ENCODE measurements at regions of chr3 and their contacts with region 1.

Region 1: DNA sequence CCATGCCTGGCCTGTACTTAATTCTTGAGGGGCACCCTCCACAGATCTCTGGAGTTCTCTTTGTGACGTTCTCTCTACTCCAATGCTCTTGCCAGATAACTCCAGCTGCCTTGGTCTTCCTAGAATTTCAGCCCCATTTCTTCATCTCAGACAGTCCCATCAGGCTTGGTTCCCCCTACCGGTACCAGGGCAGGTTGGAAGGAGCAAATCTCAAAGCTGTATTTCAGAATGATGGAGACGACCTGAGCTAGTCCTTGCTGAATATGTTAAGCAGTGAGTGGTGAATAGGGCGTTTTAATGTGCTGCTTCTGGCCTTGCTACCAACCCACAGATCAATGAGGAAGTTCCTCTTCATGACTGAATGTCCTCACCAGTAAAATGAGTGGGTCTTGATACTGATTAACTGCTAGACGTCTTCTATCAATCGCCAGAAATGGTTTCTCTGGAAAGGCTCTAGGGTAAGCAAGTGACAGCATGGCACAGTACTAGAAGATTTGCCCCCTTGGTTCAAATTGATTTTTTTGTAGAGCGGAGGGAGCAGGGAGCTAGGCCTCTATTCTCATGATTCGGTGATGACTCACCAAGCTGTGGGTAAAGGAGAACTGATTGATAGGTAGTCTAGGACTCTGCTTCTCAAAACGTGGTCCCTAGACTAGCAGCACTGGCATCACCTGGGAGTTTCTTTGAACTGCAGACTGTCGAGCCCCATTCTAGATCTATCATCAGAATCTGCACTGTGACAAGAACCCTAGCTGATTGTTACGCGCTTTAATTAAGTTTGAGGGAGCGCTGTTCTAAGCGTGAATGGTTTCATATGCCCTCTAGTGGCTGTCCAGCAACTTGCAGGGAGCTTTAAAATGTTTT is 67.8 kb downstream of the UBP1 start:
- DNase-seq: peak; percentile 35
- H3K4me3 Mint-ChIP-seq: peak overlapping the region; percentile 5
- H3K27ac Mint-ChIP-seq: peak overlapping the region; percentile 47
- H3K4me1 Mint-ChIP-seq: peaks cover 23% of the 10 kb centered on the region
- H3K27me3 Mint-ChIP-seq: no peaks in the 10 kb centered on the region
- CTCF ChIP-seq: peak; percentile 80

Region 2: GRCh38 chr3:32733631-32734229 is 638.7 kb before region 1 on chr3:
- CTCF ChIA-PET with region 1: no interaction called
- intact Hi-C with region 1: no loop called
- DNase-seq: no peak
- H3K4me3 Mint-ChIP-seq: no peak overlapping the region
- H3K27ac Mint-ChIP-seq: no peak overlapping the region
- H3K4me1 Mint-ChIP-seq: no peaks in the 10 kb centered on the region
- H3K27me3 Mint-ChIP-seq: no peaks in the 10 kb centered on the region
- CTCF ChIP-seq: peak; percentile 40

Region 3: DNA sequence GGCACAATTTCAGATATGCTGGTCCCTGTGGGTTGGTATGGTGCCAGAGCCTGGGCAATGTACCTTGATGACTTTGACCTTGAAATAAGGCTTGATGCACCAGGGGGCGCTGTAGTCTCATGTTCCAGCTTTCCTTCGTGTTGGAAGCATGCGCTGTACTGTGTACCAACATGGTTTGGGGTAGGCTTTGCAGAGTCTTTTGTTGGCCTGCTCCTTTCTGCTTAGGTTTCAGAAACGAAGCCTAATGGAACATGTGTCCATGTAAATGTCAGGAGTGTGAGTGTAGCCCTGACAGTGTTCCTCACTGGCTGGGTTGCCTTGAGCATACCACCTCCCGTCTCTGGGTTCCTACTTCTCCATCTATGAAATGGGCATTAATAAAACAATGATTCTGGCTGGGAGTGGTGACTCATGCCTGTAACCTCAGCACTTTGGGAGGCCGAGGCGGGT is 424.6 kb before region 1 on chr3:
- CTCF ChIA-PET with region 1: interaction called, 3 read pairs
- intact Hi-C with region 1: loop called (anchors 10 kb)
- DNase-seq: peak; percentile 88
- H3K4me3 Mint-ChIP-seq: no peak overlapping the region
- H3K27ac Mint-ChIP-seq: no peak overlapping the region
- H3K4me1 Mint-ChIP-seq: no peaks in the 10 kb centered on the region
- H3K27me3 Mint-ChIP-seq: no peaks in the 10 kb centered on the region
- CTCF ChIP-seq: peak; percentile 69

Region 4: GRCh38 chr3:33131331-33132018 is 241.0 kb before region 1 on chr3:
- CTCF ChIA-PET with region 1: interaction called, 120 read pairs
- intact Hi-C with region 1: loop called (anchors 1 kb)
- DNase-seq: peak; percentile 56
- H3K4me3 Mint-ChIP-seq: no peak overlapping the region
- H3K27ac Mint-ChIP-seq: no peak overlapping the region
- H3K4me1 Mint-ChIP-seq: no peaks in the 10 kb centered on the region
- H3K27me3 Mint-ChIP-seq: no peaks in the 10 kb centered on the region
- CTCF ChIP-seq: no peak

Region 5: DNA sequence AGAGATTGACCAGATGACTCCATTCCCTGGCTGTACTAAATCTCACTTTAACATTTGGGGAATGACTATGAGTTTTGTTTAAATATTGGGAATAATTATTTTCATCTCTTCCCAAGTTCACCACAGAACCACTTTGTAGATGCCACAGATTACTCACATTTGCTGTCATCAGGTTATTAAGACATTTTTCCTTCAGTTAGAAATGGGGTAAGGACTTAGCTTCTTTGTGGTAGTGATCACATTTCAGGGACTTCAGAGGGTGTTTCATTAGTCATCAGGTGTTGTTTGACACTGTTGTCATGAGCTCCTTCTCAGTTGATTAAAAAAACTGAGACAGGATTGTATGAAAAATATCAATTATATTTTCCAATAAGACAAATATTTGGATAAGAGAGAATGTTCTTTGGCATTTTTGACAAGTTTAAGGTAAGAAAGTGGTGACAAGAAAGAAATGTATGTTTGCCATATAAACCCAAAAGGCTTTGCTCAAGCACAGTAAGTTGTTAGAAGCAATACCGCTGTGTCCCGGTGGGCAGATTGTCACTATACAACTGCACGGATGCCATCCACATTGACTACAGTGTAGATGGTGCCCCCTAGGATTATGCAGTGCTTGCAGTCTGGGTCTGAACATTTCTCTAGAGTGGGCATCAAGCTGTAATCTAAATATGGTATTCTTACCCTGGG is 72.9 kb before region 1 on chr3:
- CTCF ChIA-PET with region 1: interaction called, 12 read pairs
- intact Hi-C with region 1: no loop called
- DNase-seq: no peak
- H3K4me3 Mint-ChIP-seq: no peak overlapping the region
- H3K27ac Mint-ChIP-seq: peak overlapping the region; percentile 87
- H3K4me1 Mint-ChIP-seq: peaks cover 27% of the 10 kb centered on the region
- H3K27me3 Mint-ChIP-seq: no peaks in the 10 kb centered on the region
- CTCF ChIP-seq: no peak

Region 6: GRCh38 chr3:33312361-33312760 is 60.1 kb before region 1 on chr3:
- CTCF ChIA-PET with region 1: no interaction called
- intact Hi-C with region 1: no loop called
- DNase-seq: no peak
- H3K4me3 Mint-ChIP-seq: no peak overlapping the region
- H3K27ac Mint-ChIP-seq: no peak overlapping the region
- H3K4me1 Mint-ChIP-seq: peaks cover 26% of the 10 kb centered on the region
- H3K27me3 Mint-ChIP-seq: no peaks in the 10 kb centered on the region
- CTCF ChIP-seq: no peak

Region 7: GRCh38 chr3:33360136-33360825 is 12.2 kb before region 1 on chr3:
- CTCF ChIA-PET with region 1: interaction called, 12 read pairs
- intact Hi-C with region 1: no loop called
- DNase-seq: peak; percentile 40
- H3K4me3 Mint-ChIP-seq: peak overlapping the region; percentile 24
- H3K27ac Mint-ChIP-seq: peak overlapping the region; percentile 76
- H3K4me1 Mint-ChIP-seq: peaks cover 17% of the 10 kb centered on the region
- H3K27me3 Mint-ChIP-seq: no peaks in the 10 kb centered on the region
- CTCF ChIP-seq: no peak